Body of pancreas (tissue), 4 donors: ENCODE measurements at regions of chr16 and their contacts with region 1.

Region 1: DNA sequence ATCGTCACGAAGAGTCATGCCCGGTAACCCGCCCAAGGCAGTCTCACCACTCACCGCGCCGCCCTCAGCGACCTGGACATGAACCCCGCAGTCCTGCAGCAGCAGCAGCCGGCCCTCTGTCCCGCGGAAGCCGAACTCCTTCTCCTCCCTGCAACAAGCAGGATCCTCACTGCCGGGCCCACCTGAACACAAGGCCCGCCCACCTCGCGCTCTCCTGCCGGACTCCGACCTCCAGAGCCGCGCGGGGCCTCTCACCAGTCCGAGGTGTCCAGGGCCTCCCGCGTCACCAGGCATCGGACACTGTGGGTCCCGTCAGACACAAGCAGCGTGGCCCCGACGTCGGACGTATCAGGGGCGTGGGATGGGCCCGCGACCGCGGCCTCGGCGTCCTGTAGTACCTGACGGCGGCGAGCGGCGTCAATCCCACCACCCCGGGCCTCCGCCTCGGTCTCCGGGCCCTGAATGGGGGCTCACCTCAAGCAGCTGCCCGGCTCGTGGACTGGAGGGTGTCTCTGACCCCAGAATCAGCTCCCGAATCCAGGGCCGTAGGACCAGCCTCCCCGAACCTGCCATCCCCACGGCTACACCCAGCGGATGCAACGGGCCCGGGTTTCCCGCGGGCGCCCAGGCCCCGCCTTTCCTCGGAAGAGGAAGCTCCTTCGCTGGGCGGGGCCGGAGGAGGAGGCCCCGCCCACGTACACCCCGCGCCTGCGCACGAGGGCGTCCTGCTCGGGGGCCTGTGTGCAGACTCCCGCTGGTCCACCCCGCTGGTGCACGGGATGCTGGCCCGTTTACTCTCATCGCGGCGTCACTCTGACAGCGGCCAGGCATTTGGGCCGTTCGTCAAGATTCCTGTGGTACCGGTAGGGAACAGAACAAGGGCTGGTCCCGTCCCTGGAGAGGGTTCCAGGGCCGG is at the start of gene ACD:
- DNase-seq: peak; percentile 89 to 90 (median 90)
- ATAC-seq: peak; percentile 79
- H3K4me3 ChIP-seq: peak within 1 kb of the TSS; percentile 63 to 78
- H3K27ac ChIP-seq: peak within 1 kb of the TSS; percentile 69 to 97 (median 96)
- H3K4me1 ChIP-seq: peaks cover 54% of the 10 kb centered on the region
- H3K27me3 ChIP-seq: no peaks in the 10 kb centered on the region
- CTCF ChIP-seq: peak in 1 of 7 experiments; percentile 4
- POLR2A ChIP-seq: peak; percentile 29 to 82 (median 68)
- total RNA-seq, gene ACD: 11.4 to 33.6 TPM

Region 2: GRCh38 chr16:67555795-67556212 is 104.1 kb before region 1 on chr16:
- intact Hi-C with region 1: loop called (anchors 5 kb)
- DNase-seq: no peak
- ATAC-seq: no peak
- H3K4me3 ChIP-seq: no peak overlapping the region
- H3K27ac ChIP-seq: peak overlapping the region in 1 of 4 donors; percentile 0
- H3K4me1 ChIP-seq: peaks cover 16% of the 10 kb centered on the region
- H3K27me3 ChIP-seq: no peaks in the 10 kb centered on the region
- CTCF ChIP-seq: no peak
- POLR2A ChIP-seq: no peak

Region 3: DNA sequence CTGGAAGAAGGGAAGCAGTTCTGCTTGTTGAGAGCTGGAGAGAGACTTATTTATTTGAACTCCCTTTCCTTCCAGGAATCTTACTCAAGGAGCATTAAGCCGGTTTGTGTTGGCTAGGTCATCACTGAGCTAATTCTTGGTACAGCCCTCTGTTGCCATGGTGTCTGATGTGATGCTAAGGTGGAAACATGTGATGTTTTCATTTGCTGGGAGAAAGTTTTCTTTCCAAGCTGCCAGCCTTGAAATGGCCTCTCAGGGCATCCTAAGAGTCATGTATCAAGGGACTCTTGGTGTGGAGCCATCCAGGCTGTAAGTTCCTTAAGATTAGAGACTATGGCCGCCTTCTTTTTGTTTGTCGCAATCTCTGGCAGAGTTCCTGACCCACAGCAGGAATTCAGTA is 237.3 kb after region 1 on chr16:
- intact Hi-C with region 1: no loop called
- DNase-seq: no peak
- ATAC-seq: no peak
- H3K4me3 ChIP-seq: no peak overlapping the region
- H3K27ac ChIP-seq: no peak overlapping the region
- H3K4me1 ChIP-seq: peaks cover 26% of the 10 kb centered on the region
- H3K27me3 ChIP-seq: no peaks in the 10 kb centered on the region
- CTCF ChIP-seq: no peak
- POLR2A ChIP-seq: no peak